ENCODE measurements at regions of chr12 and their contacts with region 1.

Region 1: GRCh38 chr12:120234643-120235368 is 30.7 kb downstream of the PXN start:
- DNase-seq: peak; percentile 88 to 91
- H3K4me3 ChIP-seq: peak overlapping the region in 1 of 3 donors; percentile 36
- H3K27ac ChIP-seq: peak overlapping the region; percentile 94
- H3K4me1 ChIP-seq: peaks cover 48 to 61% of the 10 kb centered on the region in 2 donors
- H3K27me3 ChIP-seq: no peaks in the 10 kb centered on the region
- CTCF ChIP-seq: peak; percentile 24 to 48 (median 41)
- POLR2A ChIP-seq: no peak

Region 2: GRCh38 chr12:120224324-120225199 is 10.2 kb before region 1 on chr12:
- intact Hi-C with region 1: no loop called
- DNase-seq: no peak
- H3K4me3 ChIP-seq: peak overlapping the region in 2 of 3 donors; percentile 19 to 26
- H3K27ac ChIP-seq: peak overlapping the region; percentile 38 to 59
- H3K4me1 ChIP-seq: peaks cover 10 to 25% of the 10 kb centered on the region in 2 donors
- H3K27me3 ChIP-seq: no peaks in the 10 kb centered on the region
- CTCF ChIP-seq: no peak
- POLR2A ChIP-seq: no peak

Region 3: DNA sequence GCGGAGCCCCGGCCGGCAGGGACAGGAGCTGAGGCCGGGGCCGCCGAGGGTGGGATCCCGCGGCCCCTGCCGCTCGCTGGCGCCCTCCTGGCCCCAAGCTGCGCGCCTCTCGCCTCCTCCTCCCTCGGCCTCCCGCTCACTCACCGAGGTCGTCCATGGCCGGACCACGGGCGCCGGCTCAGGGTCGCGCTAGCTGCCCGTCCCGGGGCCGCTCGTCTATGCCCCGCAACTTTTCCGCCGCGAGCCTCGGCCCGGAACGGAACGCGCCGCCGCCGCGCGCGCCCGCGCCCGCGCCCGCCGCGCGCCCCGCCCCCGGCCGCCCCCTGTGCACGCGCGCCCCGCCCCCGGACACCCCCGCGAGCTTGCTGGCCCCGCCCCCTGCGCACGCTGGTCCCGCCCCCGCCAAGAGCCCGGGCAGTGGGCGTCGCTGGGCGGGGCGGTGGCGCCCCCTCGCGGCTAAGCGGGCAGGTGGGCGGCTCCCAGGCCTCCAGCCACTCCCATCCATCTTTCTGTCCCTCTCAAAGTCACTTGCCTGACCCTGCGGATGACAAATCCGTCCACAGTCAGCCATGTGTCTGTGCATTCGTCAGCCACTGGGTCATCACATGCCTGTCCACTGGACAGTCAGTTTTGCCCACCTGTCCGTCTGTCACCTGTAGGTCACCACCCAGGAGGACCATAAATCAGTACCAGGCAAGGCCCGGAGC is 30.8 kb after region 1 on chr12 and contains the start of gene PXN:
- intact Hi-C with region 1: loop called (anchors 5 kb)
- DNase-seq: peak; percentile 77 to 86
- H3K4me3 ChIP-seq: peak within 1 kb of the TSS; percentile 96 to 98 (median 98)
- H3K27ac ChIP-seq: peak within 1 kb of the TSS; percentile 93 to 94
- H3K4me1 ChIP-seq: peaks cover 11 to 29% of the 10 kb centered on the region in 2 donors
- H3K27me3 ChIP-seq: no peaks in the 10 kb centered on the region
- CTCF ChIP-seq: peak; percentile 43 to 73 (median 62)
- POLR2A ChIP-seq: peak; percentile 18
- total RNA-seq, gene PXN: 44.8 to 74.1 (median 53.9) TPM

Measured in breast epithelium (tissue), 4 donors.